Common myeloid progenitor, CD34-positive (primary cell): ENCODE measurements at regions of chr12 and their contacts with region 1.

Region 1: GRCh38 chr12:49945394-49946080 is 5.0 kb upstream of the AQP2 start:
- DNase-seq: peak; percentile 71 to 79 (median 78)
- H3K4me3 ChIP-seq: peak overlapping the region in 4 of 7 experiments; percentile 21 to 64 (median 57)
- H3K27ac ChIP-seq: no peak overlapping the region
- H3K4me1 ChIP-seq: peaks cover 2 to 6% (median 3%) of the 10 kb centered on the region in 4 experiments
- H3K27me3 ChIP-seq: peaks cover 0 to 63% (median 20%) of the 10 kb centered on the region in 5 experiments

Region 2: GRCh38 chr12:49336645-49337584 is 608.6 kb before region 1 on chr12 and contains the start of gene C1QL4:
- CTCF ChIA-PET with region 1: no interaction called
- POLR2A ChIA-PET with region 1: no interaction called
- DNase-seq: peak; percentile 78 to 84 (median 84)
- H3K4me3 ChIP-seq: peak within 1 kb of the TSS in 6 of 7 experiments; percentile 23 to 55 (median 41)
- H3K27ac ChIP-seq: no peak within 1 kb of the TSS
- H3K4me1 ChIP-seq: peaks cover 0 to 20% (median 10%) of the 10 kb centered on the region in 4 experiments
- H3K27me3 ChIP-seq: peaks cover 7 to 100% (median 46%) of the 10 kb centered on the region in 5 experiments

Region 3: GRCh38 chr12:49866859-49867579 is 78.5 kb before region 1 on chr12:
- CTCF ChIA-PET with region 1: interaction called, 10 read pairs
- POLR2A ChIA-PET with region 1: no interaction called
- DNase-seq: peak; percentile 46 to 72 (median 67)
- H3K4me3 ChIP-seq: no peak overlapping the region
- H3K27ac ChIP-seq: no peak overlapping the region
- H3K4me1 ChIP-seq: peaks cover 0 to 32% (median 19%) of the 10 kb centered on the region in 4 experiments
- H3K27me3 ChIP-seq: peaks cover 0 to 12% (median 4%) of the 10 kb centered on the region in 5 experiments

Region 4: DNA sequence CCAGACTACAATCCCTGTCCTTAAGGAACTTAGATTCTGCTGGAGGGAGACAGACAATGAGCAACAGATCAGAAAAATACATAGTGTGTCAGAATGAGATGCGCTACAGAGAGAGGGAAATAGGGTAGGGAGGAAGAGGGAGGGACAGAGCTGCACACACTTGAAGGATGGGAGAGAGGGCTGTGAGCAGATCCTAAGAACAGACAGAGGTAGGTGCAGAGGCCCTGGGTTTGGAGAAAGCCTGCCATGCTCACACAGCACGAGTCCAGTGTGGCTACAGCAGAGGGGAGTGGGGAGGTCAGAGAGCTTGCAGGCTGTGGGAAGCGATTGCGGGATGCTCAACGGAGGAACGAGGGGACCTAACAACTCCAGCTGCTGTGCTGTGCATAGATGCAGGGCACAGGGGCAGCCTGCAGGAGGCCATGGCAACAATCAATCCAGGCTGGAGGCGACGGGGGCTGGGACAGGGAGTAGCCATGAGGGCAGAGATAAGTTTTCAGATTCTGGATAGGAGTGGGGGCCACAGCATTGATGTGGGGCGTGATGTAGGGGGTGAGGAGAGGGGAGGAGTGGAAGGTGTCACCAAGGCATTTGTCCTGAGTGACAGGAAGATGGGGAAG is 62.6 kb before region 1 on chr12:
- CTCF ChIA-PET with region 1: interaction called, 10 read pairs
- POLR2A ChIA-PET with region 1: no interaction called
- DNase-seq: no peak
- H3K4me3 ChIP-seq: no peak overlapping the region
- H3K27ac ChIP-seq: no peak overlapping the region
- H3K4me1 ChIP-seq: no peaks in the 10 kb centered on the region
- H3K27me3 ChIP-seq: peaks cover 0 to 29% (median 11%) of the 10 kb centered on the region in 5 experiments

Region 5: DNA sequence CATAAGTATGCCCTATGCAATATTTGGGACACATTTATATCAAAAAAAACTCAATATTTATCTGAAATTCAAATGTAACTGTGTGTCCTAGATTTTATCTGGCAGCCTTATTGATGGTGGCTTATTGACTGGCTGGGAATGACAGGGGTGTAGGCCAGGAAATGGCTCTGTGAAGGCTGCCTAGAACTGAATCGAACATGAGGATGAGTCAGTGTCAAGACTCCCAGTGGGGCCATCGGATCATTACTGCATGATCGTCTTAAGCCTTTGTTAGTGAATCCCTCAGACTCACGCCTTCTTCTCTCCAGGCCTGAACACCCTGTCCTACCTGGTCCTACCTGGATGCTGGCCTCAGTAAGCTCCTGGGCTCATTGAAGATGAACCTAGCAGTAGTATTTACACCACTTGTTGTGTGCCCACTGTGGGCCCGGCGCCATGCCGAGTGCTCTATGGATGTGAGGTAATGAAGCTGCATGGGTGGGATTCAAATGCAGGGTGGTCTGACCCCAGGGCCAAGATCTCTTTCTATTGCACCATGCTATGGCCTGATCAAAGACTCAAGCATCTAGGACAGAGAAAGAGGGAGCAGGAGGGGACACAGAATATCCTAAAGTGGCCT is 20.8 kb before region 1 on chr12:
- CTCF ChIA-PET with region 1: interaction called, 23 read pairs
- POLR2A ChIA-PET with region 1: no interaction called
- DNase-seq: no peak
- H3K4me3 ChIP-seq: no peak overlapping the region
- H3K27ac ChIP-seq: no peak overlapping the region
- H3K4me1 ChIP-seq: no peaks in the 10 kb centered on the region
- H3K27me3 ChIP-seq: peaks cover 0 to 10% (median 4%) of the 10 kb centered on the region in 5 experiments

Region 6: DNA sequence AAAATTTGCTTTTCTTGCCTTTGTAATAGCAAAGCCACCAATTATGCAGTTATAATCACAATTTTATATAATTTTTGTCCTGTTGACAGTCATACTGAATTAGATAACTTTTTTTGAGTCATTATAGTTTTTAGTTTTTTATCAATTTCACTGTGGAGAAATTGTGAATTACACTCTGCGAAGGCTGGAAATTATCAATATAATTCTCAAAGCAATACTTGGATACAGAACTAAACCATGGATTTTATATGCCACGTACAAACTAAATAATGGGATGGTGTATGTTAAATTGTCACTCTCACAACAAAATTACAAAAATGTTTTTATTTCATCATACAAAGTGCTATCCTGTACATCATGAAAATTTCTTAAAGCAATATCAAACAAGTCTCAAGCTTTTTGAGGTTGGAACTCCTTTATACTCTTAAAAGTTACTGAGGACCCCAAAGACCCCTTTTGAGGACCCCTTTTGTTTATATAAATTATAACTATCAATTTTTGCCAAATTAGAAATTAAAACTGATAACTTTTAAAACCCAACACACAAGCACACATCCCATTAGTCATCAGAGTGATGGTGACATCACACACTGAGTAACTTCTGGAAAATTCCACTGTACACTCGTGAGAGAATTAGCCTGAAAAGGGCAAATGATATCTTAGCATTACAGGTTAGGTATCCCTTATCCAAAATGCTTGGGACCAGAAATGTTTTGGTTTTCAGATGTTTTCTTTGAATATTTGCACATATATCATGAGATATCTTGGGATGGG is 14.8 kb before region 1 on chr12:
- CTCF ChIA-PET with region 1: interaction called, 27 read pairs
- POLR2A ChIA-PET with region 1: no interaction called
- DNase-seq: peak in 2 of 3 donors; percentile 10 to 25
- H3K4me3 ChIP-seq: no peak overlapping the region
- H3K27ac ChIP-seq: no peak overlapping the region
- H3K4me1 ChIP-seq: no peaks in the 10 kb centered on the region
- H3K27me3 ChIP-seq: peaks cover 0 to 8% (median 6%) of the 10 kb centered on the region in 5 experiments

Region 7: GRCh38 chr12:49959570-49960465 is 14.3 kb after region 1 on chr12:
- CTCF ChIA-PET with region 1: interaction called, 44 read pairs
- POLR2A ChIA-PET with region 1: no interaction called
- DNase-seq: peak in 2 of 3 donors; percentile 88 to 90
- H3K4me3 ChIP-seq: no peak overlapping the region
- H3K27ac ChIP-seq: no peak overlapping the region
- H3K4me1 ChIP-seq: peaks cover 6 to 43% (median 34%) of the 10 kb centered on the region in 4 experiments
- H3K27me3 ChIP-seq: peaks cover 0 to 97% (median 60%) of the 10 kb centered on the region in 5 experiments

Region 8: DNA sequence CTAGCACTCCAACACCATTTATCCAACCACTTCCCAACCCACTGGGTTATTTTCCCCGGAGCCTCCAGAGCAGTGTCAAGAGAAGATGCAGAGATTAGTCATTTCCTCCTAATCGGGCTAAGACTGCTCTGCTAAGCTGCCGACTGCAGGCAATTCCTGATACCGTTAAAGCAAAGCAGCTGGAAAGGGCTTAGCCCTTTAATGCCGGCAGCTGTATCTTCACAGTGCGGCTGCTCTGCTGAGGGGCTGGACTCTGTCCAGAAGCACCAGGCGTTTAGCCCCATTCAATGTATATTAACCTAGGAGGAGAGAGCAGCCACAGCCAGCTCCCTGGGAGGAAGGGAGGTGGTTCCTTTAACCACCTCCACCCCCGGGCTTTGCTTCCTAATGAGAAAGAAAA is 38.4 kb after region 1 on chr12:
- CTCF ChIA-PET with region 1: no interaction called
- POLR2A ChIA-PET with region 1: no interaction called
- DNase-seq: peak; percentile 25 to 60 (median 51)
- H3K4me3 ChIP-seq: no peak overlapping the region
- H3K27ac ChIP-seq: no peak overlapping the region
- H3K4me1 ChIP-seq: peaks cover 0 to 29% (median 22%) of the 10 kb centered on the region in 4 experiments
- H3K27me3 ChIP-seq: no peaks in the 10 kb centered on the region

Region 9: GRCh38 chr12:50162230-50162629 is 216.7 kb after region 1 on chr12:
- CTCF ChIA-PET with region 1: no interaction called
- POLR2A ChIA-PET with region 1: no interaction called
- DNase-seq: no peak
- H3K4me3 ChIP-seq: no peak overlapping the region
- H3K27ac ChIP-seq: no peak overlapping the region
- H3K4me1 ChIP-seq: peaks cover 7 to 15% (median 11%) of the 10 kb centered on the region in 4 experiments
- H3K27me3 ChIP-seq: no peaks in the 10 kb centered on the region